ENCODE measurements at regions of chr6 and their contacts with region 1.

Region 1: DNA sequence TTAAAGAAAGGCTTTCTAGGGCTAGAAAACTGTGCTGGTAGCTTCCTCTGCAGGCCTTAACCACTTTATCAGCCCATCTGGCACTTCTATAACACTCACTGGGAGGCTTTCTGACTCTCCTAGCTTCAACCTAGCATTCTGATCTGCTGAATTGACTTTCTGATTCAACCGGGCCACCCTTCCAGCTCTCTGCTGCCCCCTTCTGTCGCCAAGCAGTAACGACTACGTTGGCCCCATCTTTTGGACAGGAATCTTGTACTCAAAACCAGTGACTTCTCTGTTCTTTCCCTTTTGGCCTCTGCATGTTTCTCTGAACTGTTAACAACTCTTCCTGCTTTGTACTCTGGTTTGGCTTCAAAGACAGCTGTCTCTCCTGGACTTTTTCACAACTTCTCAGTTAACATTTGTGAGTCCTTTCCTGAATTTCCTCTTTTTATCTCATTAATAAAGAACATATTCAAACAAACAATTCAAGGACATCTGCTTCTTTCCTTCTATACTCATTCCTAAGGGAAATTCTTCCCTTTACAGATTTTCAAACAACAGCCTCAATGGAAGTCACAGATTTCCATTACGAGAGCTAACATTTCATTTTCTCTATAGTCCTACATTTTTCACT is 43.9 kb upstream of the FAM135A start:
- DNase-seq: peak; percentile 74
- ATAC-seq: peak; percentile 94
- H3K4me3 Mint-ChIP-seq: no peak overlapping the region
- H3K27ac Mint-ChIP-seq: no peak overlapping the region
- H3K4me1 Mint-ChIP-seq: no peaks in the 10 kb centered on the region
- H3K27me3 Mint-ChIP-seq: peaks cover 5% of the 10 kb centered on the region
- CTCF ChIP-seq: peak; percentile 93

Region 2: DNA sequence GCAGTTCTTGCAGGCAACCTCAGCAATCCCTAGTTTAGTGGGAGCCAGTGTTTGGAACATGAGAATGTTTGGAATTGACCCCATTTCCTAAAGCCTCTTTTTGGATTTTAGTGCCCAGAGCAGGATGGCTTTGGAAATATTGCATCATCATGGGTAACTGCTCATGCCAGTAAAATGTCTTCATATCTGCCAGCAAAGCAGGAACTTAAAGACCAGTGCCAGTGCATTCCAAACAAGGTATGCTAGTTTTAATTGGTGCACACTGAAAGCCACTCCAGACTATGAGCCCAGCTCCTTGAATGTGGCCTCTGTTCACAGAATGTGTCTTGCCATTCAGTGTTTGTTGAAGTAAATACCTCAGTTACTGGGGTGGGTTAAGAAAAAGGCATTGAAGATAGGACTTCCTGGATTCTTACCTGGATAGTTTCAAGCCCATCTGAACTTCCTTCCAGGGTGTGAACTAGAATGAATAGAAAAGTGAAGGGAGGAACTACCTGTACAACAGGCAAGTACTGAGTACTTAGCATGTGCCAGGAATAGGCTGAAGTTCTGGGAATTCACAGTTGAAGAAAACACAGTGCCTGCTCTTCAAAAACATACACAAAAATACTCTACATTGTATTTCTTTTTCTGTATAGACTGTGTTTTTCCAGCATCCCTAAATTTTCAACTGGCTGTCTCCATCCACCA is 432.6 kb before region 1 on chr6:
- CTCF ChIA-PET with region 1: no interaction called
- POLR2A ChIA-PET with region 1: no interaction called
- intact Hi-C with region 1: no loop called
- DNase-seq: no peak
- ATAC-seq: no peak
- H3K4me3 Mint-ChIP-seq: no peak overlapping the region
- H3K27ac Mint-ChIP-seq: no peak overlapping the region
- H3K4me1 Mint-ChIP-seq: no peaks in the 10 kb centered on the region
- H3K27me3 Mint-ChIP-seq: peaks cover 7% of the 10 kb centered on the region
- CTCF ChIP-seq: no peak

Region 3: GRCh38 chr6:70277470-70277869 is 92.0 kb before region 1 on chr6:
- CTCF ChIA-PET with region 1: no interaction called
- POLR2A ChIA-PET with region 1: no interaction called
- intact Hi-C with region 1: no loop called
- DNase-seq: no peak
- ATAC-seq: no peak
- H3K4me3 Mint-ChIP-seq: no peak overlapping the region
- H3K27ac Mint-ChIP-seq: no peak overlapping the region
- H3K4me1 Mint-ChIP-seq: no peaks in the 10 kb centered on the region
- H3K27me3 Mint-ChIP-seq: peaks cover 31% of the 10 kb centered on the region
- CTCF ChIP-seq: no peak

Region 4: GRCh38 chr6:70310063-70310694 is 59.3 kb before region 1 on chr6:
- CTCF ChIA-PET with region 1: interaction called, 202 read pairs
- POLR2A ChIA-PET with region 1: no interaction called
- intact Hi-C with region 1: loop called (anchors 1 kb)
- DNase-seq: no peak
- ATAC-seq: no peak
- H3K4me3 Mint-ChIP-seq: no peak overlapping the region
- H3K27ac Mint-ChIP-seq: no peak overlapping the region
- H3K4me1 Mint-ChIP-seq: peaks cover 7% of the 10 kb centered on the region
- H3K27me3 Mint-ChIP-seq: peaks cover 22% of the 10 kb centered on the region
- CTCF ChIP-seq: peak; percentile 42

Region 5: DNA sequence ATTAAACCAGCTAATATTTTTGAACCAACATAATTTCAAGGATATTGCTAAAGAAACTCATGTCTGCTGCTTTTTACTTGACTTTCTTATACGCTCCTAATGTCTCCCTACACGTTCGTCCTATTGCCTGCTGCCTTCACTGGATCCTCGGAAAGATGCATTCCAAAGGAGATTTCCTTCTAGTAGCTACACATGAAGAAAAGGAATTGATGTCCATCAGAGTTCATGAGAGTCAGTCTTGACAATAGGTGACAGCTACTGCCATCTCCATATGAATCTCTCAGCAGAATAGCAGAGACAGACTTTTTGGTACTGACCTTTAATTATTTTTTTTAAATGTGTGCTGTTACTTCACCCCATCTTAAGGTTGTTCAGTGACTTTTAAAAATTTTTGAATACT is 42.4 kb before region 1 on chr6:
- CTCF ChIA-PET with region 1: interaction called, 12 read pairs
- POLR2A ChIA-PET with region 1: no interaction called
- intact Hi-C with region 1: no loop called
- DNase-seq: no peak
- ATAC-seq: no peak
- H3K4me3 Mint-ChIP-seq: no peak overlapping the region
- H3K27ac Mint-ChIP-seq: no peak overlapping the region
- H3K4me1 Mint-ChIP-seq: no peaks in the 10 kb centered on the region
- H3K27me3 Mint-ChIP-seq: peaks cover 2% of the 10 kb centered on the region
- CTCF ChIP-seq: no peak

Region 6: GRCh38 chr6:70390067-70390466 is 20.6 kb after region 1 on chr6:
- CTCF ChIA-PET with region 1: interaction called, 15 read pairs
- POLR2A ChIA-PET with region 1: no interaction called
- intact Hi-C with region 1: no loop called
- DNase-seq: no peak
- ATAC-seq: no peak
- H3K4me3 Mint-ChIP-seq: no peak overlapping the region
- H3K27ac Mint-ChIP-seq: no peak overlapping the region
- H3K4me1 Mint-ChIP-seq: no peaks in the 10 kb centered on the region
- H3K27me3 Mint-ChIP-seq: peaks cover 8% of the 10 kb centered on the region
- CTCF ChIP-seq: no peak

Region 7: DNA sequence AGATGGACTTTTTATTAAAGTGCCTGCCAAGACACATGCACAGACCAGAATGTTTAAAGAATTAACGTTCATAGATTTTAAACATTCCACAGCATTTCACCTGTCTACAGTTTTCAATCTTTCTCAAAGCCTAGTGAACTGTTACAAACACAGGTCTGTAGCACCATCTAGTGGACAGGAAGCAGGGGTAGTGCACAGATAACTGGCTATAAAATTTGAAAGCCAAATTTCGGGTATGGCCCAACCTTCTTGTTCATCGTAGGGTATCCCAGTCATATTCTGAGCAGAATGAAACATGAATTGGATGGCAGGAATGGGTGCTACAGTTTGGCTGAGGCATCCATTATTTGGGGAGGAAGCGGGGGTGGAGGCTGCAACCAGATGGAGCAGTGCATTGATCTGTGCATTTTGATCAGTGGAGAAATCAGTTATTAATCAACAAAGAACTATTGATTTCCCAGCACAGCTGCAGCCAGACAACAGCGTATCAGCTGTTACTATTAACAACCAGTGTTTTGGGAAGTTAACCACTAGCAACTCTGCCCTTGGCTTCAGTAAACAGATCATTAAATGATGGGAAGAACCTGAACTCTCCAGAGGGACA is 643.5 kb after region 1 on chr6:
- CTCF ChIA-PET with region 1: interaction called, 10 read pairs
- POLR2A ChIA-PET with region 1: no interaction called
- intact Hi-C with region 1: no loop called
- DNase-seq: peak; percentile 15
- ATAC-seq: peak; percentile 51
- H3K4me3 Mint-ChIP-seq: no peak overlapping the region
- H3K27ac Mint-ChIP-seq: no peak overlapping the region
- H3K4me1 Mint-ChIP-seq: no peaks in the 10 kb centered on the region
- H3K27me3 Mint-ChIP-seq: peaks cover 10% of the 10 kb centered on the region
- CTCF ChIP-seq: peak; percentile 76